ENCODE measurements at regions of chr10 and their contacts with region 1.

Region 1: DNA sequence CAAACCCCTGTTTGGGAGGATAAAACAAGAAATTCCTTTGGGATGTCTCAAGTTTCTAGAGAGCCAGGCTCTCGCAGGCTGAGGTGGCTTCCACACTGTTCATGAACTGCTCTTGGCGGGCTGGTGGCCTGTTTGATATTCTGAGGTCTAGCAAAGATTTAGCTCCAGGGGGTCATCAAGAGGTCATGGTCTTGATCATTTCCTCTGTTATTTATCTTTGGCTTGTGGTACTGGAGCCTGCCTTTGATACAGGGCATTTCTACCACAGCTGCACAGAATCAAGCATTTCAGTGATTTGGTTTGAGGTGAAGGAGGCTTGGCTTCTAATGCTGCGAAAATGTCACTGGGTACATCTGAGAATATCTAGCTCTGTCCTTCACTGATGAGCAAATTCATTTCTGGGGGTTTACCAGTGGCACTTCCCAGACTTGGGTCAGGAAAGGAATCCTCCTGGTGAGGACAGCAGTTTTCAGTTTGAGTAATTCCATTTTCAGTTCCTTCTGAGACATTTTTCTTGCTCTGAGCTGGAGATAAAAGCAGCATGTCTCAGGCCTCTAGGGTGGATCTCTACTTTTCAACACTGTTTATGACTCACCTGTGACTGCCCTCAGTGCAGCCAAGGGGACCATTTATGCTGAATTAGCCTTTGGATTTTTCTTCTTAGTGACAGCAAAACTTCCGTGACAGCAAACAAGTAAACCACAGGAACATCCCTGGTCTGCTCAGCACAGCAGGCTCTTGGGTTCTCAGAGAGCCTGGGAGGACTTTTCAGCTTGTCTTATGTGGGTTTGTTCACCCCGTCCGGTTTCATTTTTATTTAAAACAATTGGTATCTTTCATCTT is 312.0 kb downstream of the RNLS start:
- H3K4me3 Mint-ChIP-seq: peak overlapping the region; percentile 57
- H3K27ac Mint-ChIP-seq: peak overlapping the region; percentile 98
- H3K4me1 Mint-ChIP-seq: peaks cover 70% of the 10 kb centered on the region
- H3K27me3 Mint-ChIP-seq: no peaks in the 10 kb centered on the region

Region 2: GRCh38 chr10:88064608-88065382 is 206.3 kb before region 1 on chr10:
- intact Hi-C with region 1: loop called (anchors 2 kb)
- H3K4me3 Mint-ChIP-seq: no peak overlapping the region
- H3K27ac Mint-ChIP-seq: peak overlapping the region; percentile 12
- H3K4me1 Mint-ChIP-seq: peaks cover 86% of the 10 kb centered on the region
- H3K27me3 Mint-ChIP-seq: no peaks in the 10 kb centered on the region

Region 3: DNA sequence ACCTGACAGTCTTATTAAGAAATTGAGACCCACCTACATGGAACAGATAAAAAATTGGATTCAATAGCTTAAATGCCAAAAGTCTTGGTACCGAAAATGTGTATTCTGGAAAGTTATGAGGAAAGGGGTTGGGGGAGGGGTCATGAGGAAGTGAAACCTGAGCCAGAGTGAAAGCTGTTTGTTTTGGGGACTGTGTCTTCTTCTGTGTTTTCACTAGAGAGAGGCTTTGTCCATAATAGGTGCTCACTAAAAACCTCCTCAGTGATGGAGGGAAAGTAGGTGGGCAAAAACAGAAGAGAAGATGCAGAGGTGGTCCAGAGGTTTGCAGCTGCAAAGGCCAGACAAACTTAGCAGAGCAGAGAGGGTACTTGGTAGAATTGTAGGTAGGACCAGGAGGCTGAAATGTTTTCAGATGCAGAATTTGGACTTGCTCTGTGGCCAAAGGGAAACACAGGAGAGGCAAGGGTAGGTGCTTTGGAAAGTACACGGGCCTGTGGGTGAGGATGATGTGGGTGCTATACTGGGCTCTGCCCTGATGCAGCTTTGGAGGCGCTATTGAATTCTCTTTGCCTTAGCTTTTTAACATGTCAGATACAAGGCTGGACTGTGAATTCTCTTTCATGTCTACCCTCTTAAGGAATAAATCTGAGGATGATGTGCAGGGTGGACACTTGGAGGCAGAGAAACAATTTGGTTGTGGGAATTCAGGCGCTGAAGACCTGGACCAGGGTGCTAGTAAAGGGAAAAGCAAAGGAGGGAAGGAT is 153.0 kb before region 1 on chr10:
- intact Hi-C with region 1: loop called (anchors 5 kb)
- H3K4me3 Mint-ChIP-seq: no peak overlapping the region
- H3K27ac Mint-ChIP-seq: no peak overlapping the region
- H3K4me1 Mint-ChIP-seq: peaks cover 15% of the 10 kb centered on the region
- H3K27me3 Mint-ChIP-seq: peaks cover 1% of the 10 kb centered on the region

Region 4: GRCh38 chr10:88234297-88234696 is 36.8 kb before region 1 on chr10:
- intact Hi-C with region 1: no loop called
- H3K4me3 Mint-ChIP-seq: no peak overlapping the region
- H3K27ac Mint-ChIP-seq: no peak overlapping the region
- H3K4me1 Mint-ChIP-seq: peaks cover 17% of the 10 kb centered on the region
- H3K27me3 Mint-ChIP-seq: no peaks in the 10 kb centered on the region

Region 5: DNA sequence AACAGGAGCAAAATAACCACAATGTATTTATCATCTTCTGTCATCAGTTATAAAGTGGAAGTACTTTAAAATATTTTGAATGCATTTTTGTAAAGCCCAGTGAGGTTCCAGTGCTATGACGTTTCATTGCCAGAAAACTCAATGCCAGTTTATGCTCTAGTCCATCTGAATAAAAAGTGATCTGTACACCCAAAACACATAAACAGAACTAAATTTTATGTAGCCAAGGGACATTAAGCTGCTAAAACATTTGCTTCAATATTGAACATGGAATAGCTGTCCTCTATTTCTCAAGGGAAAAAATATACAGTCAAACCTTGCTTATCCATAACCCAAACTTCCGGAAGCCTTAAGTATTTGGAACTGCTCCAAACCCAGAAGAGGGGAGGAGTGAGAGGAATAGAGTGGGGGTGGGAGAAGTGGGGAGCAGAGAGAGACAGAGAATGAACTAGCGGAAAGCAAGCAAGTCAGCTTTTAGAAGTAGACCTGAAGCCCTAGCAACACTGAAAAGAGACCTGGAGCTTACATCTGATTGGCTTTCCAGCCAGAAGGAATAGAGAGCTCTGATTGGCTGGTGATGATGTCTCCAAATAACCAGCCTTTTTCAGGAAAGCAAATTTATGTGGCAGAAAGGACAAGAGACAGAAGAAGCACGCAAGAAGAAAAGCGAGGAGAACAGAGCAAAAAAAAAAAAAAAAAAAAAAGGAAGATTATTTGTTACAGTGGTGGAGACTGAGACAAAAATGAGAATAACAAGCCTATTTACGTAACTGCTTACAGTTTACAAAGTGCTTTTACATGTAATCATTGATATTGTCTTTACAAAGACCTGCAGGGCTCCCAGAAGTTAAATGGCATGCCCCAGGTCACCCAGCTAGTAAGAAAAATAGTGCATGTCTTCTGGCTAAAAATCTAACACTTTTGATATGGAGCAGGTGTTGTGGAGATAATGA is 116.0 kb after region 1 on chr10:
- intact Hi-C with region 1: loop called (anchors 10 kb)
- H3K4me3 Mint-ChIP-seq: no peak overlapping the region
- H3K27ac Mint-ChIP-seq: no peak overlapping the region
- H3K4me1 Mint-ChIP-seq: peaks cover 6% of the 10 kb centered on the region
- H3K27me3 Mint-ChIP-seq: no peaks in the 10 kb centered on the region